AG04450 (cell line): ENCODE measurements at regions of chr7 and their contacts with region 1.

Region 1: DNA sequence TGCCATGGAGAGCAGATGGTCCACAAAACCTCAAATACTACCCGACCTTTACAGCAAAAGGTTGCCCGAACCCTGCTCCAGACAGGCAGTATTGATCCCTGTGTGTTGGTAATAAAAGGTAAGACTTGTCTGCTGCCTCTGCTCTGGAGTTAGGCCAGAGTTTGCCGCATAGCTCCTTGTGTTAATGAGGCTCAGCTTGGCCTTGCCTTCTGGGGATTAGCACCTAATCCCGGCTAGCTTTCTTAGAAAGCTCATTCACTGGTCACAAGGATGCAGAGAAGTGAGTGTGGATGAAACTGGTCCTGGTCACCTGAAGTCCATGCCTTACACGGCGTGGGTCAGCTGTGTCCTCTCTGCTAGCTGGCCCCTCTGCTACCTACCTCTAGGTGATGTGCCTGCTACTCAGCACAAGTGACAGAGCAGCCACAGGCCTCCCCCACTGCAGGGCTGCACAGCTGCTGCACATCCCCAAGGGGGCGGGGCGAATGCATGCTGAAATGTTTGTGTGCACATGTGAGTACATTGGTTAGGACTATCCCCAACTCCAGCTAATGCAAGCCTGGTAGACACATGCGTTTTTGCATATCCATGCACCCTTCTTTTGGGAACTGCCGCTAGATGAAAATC is 31.7 kb upstream of the SYPL1 start:
- DNase-seq: no peak
- H3K4me3 ChIP-seq: no peak overlapping the region
- H3K27ac ChIP-seq: no peak overlapping the region
- H3K27me3 ChIP-seq: peaks cover 11% of the 10 kb centered on the region
- CTCF ChIP-seq: no peak

Region 2: DNA sequence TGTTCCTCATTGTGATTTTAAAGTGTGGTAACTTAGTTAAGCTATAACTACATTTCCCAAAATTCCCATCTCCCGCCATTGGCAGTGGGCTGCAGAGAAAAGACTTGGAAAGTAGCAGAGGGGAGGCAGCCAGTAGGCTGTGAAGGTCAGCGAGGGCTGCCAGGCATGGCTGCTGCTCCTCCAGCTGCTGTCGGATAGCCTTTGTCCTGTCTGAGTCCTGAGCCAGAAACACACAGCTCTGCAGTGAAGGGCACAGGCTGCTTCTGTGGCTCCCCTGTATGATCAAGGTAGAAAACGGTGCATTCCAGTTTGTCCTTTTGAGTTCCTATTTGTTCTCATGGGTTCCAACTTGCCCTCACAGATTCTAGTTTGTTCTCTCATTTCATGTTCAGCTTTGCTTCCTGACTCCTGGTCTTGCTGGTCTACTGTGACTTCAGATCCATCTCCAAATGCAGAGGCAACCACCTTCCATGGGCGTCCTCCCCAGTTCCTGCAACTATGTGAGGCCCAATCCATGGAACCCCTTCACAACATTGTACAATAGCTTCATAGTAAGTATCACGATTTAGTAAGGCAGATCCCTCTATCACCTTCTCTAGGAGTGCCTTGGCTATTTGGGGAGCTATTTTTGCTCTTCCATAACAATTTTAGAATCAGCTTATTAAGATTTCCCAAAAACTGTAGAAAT is 63.4 kb before region 1 on chr7:
- CTCF ChIA-PET with region 1: no interaction called
- POLR2A ChIA-PET with region 1: interaction called, 10 read pairs
- DNase-seq: no peak
- H3K4me3 ChIP-seq: no peak overlapping the region
- H3K27ac ChIP-seq: no peak overlapping the region
- H3K27me3 ChIP-seq: no peaks in the 10 kb centered on the region
- CTCF ChIP-seq: no peak

Region 3: GRCh38 chr7:106504645-106505044 is 360.8 kb after region 1 on chr7:
- CTCF ChIA-PET with region 1: no interaction called
- POLR2A ChIA-PET with region 1: no interaction called
- DNase-seq: no peak
- H3K4me3 ChIP-seq: no peak overlapping the region
- H3K27ac ChIP-seq: no peak overlapping the region
- H3K27me3 ChIP-seq: no peaks in the 10 kb centered on the region
- CTCF ChIP-seq: no peak